ENCODE measurements at regions of chr6 and their contacts with region 1.

Region 1: DNA sequence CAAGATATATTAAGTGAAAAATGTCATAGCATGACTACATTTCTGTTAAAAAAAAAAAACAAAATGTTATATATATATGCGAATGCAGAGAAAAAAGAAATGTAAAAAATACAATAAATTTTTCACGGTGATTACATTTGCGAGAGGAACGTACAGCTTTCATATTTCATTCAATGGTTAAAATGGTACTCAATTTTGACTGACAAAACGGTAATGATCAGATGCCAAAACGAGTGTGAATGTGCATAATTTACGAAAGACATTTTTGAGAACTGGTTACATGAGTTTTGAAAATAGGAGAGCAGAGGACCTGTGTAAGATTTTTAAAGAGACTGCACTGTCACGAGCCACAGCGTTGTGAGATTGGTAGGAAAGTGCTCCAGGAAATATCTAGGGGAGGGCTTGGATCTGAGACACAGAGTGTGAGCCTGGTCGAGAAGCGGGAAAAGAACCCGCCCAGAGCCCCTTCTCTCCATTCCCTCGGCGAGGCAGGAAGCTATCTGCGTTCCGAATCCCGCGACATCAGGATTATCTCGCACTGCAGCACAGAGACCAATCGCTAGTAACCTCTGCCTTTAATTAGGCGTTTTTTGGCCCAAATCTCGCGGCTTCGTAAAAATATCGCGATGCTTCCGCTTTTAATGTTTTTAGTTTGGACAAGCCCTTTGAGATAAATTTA is 28.5 kb downstream of the TRIM27 start:
- DNase-seq: peak; percentile 95
- H3K4me3 Mint-ChIP-seq: peak overlapping the region; percentile 86
- H3K27ac Mint-ChIP-seq: peak overlapping the region; percentile 97
- H3K4me1 Mint-ChIP-seq: peaks cover 12% of the 10 kb centered on the region
- H3K27me3 Mint-ChIP-seq: peaks cover 2% of the 10 kb centered on the region

Region 2: DNA sequence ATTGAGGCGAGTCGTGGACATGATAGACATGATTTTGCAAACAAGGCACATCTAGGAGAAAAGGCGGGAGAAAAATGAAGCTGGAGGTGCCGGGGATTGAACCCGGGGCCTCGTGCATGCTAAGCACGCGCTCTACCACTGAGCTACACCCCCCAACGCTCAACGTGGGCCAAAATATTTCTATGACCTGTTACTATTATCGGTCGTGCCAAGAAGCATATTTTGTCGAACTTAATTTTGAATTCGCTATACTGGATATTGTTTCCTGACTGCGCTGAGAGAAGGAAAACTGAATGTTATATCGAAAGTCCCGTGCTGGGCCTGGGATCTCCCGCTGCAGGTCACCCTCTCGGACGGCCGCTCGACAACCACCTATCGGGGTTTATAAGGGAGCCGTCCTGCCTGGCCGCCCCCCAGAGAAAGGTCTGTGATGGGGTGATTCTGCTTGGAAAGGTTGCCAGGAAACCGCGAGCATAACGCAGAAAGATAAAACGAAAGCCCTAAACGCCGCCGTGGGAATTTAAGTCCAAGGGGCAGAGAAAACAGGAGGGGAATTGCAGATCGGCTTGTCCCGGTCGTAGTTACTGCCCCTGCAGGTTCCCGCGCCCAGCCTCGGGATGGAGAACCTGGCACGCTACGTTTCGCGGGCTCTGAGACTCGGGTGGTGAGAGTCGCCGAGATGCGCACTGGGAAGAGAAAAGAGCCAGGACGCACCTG is 31.5 kb before region 1 on chr6:
- CTCF ChIA-PET with region 1: interaction called, 4 read pairs
- POLR2A ChIA-PET with region 1: interaction called, 11 read pairs
- intact Hi-C with region 1: loop called (anchors 1 kb)
- DNase-seq: peak; percentile 90
- H3K4me3 Mint-ChIP-seq: peak overlapping the region; percentile 82
- H3K27ac Mint-ChIP-seq: peak overlapping the region; percentile 91
- H3K4me1 Mint-ChIP-seq: peaks cover 38% of the 10 kb centered on the region
- H3K27me3 Mint-ChIP-seq: peaks cover 5% of the 10 kb centered on the region

Region 3: GRCh38 chr6:28880894-28881780 is 14.1 kb before region 1 on chr6:
- CTCF ChIA-PET with region 1: interaction called, 4 read pairs
- POLR2A ChIA-PET with region 1: interaction called, 24 read pairs
- intact Hi-C with region 1: loop called (anchors 1 kb)
- DNase-seq: peak; percentile 78
- H3K4me3 Mint-ChIP-seq: peak overlapping the region; percentile 65
- H3K27ac Mint-ChIP-seq: peak overlapping the region; percentile 24
- H3K4me1 Mint-ChIP-seq: peaks cover 28% of the 10 kb centered on the region
- H3K27me3 Mint-ChIP-seq: peaks cover 14% of the 10 kb centered on the region

Region 4: GRCh38 chr6:28923318-28924102 is 28.2 kb after region 1 on chr6 and contains the start of gene TRIM27:
- CTCF ChIA-PET with region 1: interaction called, 12 read pairs
- POLR2A ChIA-PET with region 1: interaction called, 8 read pairs
- intact Hi-C with region 1: loop called (anchors 1 kb)
- DNase-seq: peak; percentile 87
- H3K4me3 Mint-ChIP-seq: peak within 1 kb of the TSS; percentile 94
- H3K27ac Mint-ChIP-seq: peak within 1 kb of the TSS; percentile 94
- H3K4me1 Mint-ChIP-seq: peaks cover 38% of the 10 kb centered on the region
- H3K27me3 Mint-ChIP-seq: no peaks in the 10 kb centered on the region
- total RNA-seq, gene TRIM27: 49.7 to 54.6 TPM

Region 5: DNA sequence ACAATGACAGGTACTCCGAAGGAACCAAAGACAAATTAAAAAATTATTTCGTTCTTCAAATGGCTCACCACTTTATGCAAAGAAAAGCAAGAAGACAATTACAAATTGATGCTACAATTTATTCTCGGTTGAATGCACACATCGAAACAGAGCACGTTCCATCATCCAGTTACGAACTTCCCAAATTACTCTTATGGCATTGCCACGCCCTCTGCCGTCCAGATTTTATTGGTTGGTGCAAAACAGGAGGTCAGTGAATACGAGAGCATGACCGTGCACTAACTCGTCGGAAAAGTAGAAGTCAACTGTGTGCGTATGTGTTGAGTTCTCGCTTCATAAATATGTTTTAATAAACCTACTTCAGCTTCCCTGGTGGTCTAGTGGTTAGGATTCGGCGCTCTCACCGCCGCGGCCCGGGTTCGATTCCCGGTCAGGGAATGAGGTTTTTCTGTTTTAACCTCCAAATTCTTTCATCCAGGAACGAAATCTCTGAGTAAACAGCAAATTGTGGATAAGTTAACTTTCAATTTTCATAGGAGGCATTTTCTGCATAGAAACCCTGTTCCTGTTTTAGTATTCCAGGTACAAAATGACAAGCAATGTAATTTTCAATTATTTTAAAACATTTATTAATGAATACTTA is 86.7 kb after region 1 on chr6:
- CTCF ChIA-PET with region 1: interaction called, 3 read pairs
- POLR2A ChIA-PET with region 1: no interaction called
- intact Hi-C with region 1: loop called (anchors 1 kb)
- DNase-seq: peak; percentile 80
- H3K4me3 Mint-ChIP-seq: peak overlapping the region; percentile 82
- H3K27ac Mint-ChIP-seq: peak overlapping the region; percentile 93
- H3K4me1 Mint-ChIP-seq: peaks cover 58% of the 10 kb centered on the region
- H3K27me3 Mint-ChIP-seq: peaks cover 27% of the 10 kb centered on the region